ENCODE measurements at regions of chr5 and their contacts with region 1.

Region 1: DNA sequence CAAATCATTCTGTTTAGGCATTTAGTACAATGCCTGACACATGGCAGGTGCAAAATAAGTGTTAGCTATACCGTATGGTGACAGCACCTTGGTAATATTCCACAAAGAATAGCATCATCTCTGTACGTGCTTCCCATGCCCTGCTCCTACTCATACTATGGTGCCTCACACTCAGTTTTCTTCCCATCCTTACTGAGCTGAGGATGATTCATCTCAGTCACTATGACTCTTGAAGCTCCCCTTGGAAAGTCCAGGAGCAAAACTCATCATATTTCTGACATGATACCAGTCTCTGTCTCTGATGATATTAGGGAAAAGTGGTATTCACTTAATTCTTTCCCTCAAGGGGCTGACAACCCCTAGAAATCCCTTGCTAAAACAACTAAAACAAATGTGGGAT is 423.3 kb downstream of the EFNA5 start:
- DNase-seq: no peak
- ATAC-seq: no peak
- H3K4me3 ChIP-seq: no peak overlapping the region
- H3K27ac ChIP-seq: no peak overlapping the region
- H3K4me1 ChIP-seq: no peaks in the 10 kb centered on the region
- H3K27me3 ChIP-seq: no peaks in the 10 kb centered on the region
- CTCF ChIP-seq: no peak

Region 2: GRCh38 chr5:107099506-107099905 is 147.9 kb before region 1 on chr5:
- CTCF ChIA-PET with region 1: no interaction called
- POLR2A ChIA-PET with region 1: no interaction called
- in situ Hi-C with region 1: no loop called
- intact Hi-C with region 1: no loop called
- DNase-seq: no peak
- ATAC-seq: no peak
- H3K4me3 ChIP-seq: no peak overlapping the region
- H3K27ac ChIP-seq: no peak overlapping the region
- H3K4me1 ChIP-seq: no peaks in the 10 kb centered on the region
- H3K27me3 ChIP-seq: no peaks in the 10 kb centered on the region
- CTCF ChIP-seq: no peak

Region 3: DNA sequence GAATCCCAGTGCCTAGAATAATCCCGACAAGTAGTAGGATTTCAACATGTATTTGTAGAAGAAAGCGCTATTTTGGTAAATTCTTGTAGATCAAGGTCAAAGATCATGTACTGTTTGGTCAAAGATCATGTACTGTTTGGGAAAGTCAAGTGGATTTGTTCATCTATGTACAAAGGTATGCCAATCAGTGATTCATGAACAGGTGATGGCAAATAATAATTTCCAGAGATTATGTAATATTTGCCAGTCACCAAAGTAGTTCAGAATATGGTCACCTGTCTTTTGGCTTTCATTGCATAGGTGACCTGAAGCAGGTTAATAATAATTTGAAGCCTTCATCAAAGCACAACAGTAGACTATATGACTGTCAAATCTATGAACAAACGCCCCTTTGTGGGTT is 25.1 kb after region 1 on chr5:
- CTCF ChIA-PET with region 1: no interaction called
- POLR2A ChIA-PET with region 1: interaction called, 11 read pairs
- in situ Hi-C with region 1: no loop called
- intact Hi-C with region 1: no loop called
- DNase-seq: no peak
- ATAC-seq: no peak
- H3K4me3 ChIP-seq: no peak overlapping the region
- H3K27ac ChIP-seq: no peak overlapping the region
- H3K4me1 ChIP-seq: no peaks in the 10 kb centered on the region
- H3K27me3 ChIP-seq: no peaks in the 10 kb centered on the region
- CTCF ChIP-seq: no peak

Measured in Panc1 (cell line).